ENCODE measurements at regions of chr7 and their contacts with region 1.

Region 1: DNA sequence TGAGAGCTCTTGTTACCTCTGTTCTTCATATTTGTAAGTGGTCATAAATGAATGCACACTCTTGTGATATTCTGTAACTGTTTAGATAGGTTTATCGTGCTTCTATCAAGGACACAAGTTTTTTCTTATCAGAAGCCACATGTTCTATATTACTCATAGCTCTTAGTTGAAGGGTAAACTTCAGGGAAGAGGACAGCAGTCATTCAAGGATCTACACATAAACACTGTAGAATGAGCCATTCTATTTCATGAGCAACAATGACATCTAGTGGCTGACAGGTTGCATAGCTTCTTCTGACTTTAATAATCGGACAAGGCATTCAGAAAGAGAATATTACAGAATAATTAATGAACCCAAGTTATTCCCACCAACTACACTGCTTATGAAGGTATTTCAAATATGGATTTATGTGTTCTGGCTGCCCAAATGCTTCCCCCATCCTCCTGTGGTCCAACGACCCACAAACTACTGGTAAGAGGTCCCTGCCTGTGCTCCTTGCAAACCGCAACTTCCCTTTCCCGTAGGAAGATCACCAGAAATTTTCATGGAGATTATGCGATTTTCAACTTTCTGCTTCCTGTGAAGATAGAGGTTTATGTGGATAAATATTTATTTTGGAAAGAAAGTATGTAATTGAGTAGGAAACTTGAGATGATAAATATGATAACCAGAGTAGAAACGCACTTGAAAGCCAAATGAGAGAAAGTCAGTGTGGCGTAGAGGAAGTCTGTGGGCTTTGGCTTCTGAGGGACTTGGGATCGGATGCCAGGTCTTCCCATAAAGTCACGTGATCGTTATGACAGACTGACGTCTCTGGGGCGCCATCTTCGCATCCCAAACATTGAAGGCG is 16.8 kb upstream of the ABCB5 start:
- DNase-seq: peak in 1 of 3 donors; percentile 21
- ATAC-seq: peak; percentile 72 to 74
- H3K4me3 ChIP-seq: no peak overlapping the region
- H3K27ac ChIP-seq: no peak overlapping the region
- H3K4me1 ChIP-seq: no peaks in the 10 kb centered on the region
- H3K27me3 ChIP-seq: no peaks in the 10 kb centered on the region

Region 2: DNA sequence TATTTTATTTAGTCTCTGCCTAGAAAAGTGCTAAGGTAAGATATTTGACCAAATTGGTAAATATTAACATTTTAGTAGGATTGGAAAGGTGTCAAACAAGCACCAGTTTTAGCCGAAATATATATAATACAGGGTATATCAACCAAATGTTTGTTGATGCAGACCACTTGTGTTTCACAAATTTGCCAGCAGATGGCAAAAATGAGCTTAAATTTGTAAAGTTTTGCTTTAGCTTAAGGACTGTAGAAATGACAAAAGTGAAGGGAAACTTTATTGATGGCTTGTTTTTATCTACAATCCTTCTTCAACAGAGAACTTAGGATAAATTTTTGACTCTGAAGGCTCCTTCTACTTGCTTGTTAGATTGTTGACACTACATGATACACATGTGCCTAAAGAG is 885.0 kb before region 1 on chr7:
- intact Hi-C with region 1: loop called in 3 of 4 experiments (anchors 5 to 10 kb)
- DNase-seq: no peak
- ATAC-seq: no peak
- H3K4me3 ChIP-seq: no peak overlapping the region
- H3K27ac ChIP-seq: no peak overlapping the region
- H3K4me1 ChIP-seq: no peaks in the 10 kb centered on the region
- H3K27me3 ChIP-seq: no peaks in the 10 kb centered on the region

Region 3: DNA sequence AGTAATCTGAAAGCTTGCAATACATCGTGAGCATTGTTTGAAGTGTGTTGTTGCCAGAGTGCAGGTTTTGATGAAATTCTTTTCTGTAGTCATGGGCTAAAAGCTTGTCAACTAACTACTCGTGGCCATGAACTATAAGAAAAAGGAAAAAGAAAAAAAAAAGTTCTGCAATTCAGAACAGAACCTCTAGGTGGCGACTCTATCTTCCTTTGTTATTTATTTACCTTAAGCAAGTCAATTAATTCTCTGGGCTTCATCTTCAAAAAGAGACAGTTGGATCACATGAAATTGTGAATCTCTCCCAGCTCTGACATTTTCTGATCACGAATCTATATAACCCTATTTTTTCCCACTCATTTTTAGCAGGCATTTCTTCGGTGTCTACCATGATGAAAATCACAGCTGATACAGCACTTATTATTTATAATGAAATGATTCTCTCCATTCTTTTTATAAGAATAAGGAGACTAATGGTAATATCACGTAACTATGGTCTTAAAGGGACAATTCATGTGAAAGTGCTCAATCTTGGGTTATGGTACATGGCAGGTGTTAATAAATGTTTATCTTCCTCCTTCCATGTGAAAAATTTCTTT is 844.1 kb before region 1 on chr7:
- intact Hi-C with region 1: loop called in 3 of 4 experiments (anchors 10 kb)
- DNase-seq: no peak
- ATAC-seq: no peak
- H3K4me3 ChIP-seq: no peak overlapping the region
- H3K27ac ChIP-seq: no peak overlapping the region
- H3K4me1 ChIP-seq: no peaks in the 10 kb centered on the region
- H3K27me3 ChIP-seq: no peaks in the 10 kb centered on the region

Region 4: DNA sequence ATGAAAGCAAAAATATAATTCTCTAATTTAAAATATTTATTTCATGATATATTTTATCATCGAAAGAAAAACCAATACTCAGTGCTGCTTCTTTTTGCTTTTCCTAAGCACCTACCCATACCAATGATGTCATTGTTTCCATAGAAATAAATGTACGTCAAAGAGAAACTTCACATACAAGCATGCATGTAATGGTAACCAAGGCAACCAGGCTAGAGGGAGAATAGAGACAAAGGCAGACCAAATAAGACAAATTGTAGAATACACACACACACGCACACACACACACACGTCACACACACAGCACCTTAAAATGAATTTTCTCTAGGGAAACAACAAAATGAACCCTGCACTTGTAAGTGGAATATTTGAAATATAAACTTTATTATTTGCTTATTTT is 457.0 kb before region 1 on chr7:
- intact Hi-C with region 1: loop called in 1 of 4 experiments (anchors 10 kb)
- DNase-seq: no peak
- ATAC-seq: no peak
- H3K4me3 ChIP-seq: no peak overlapping the region
- H3K27ac ChIP-seq: no peak overlapping the region
- H3K4me1 ChIP-seq: no peaks in the 10 kb centered on the region
- H3K27me3 ChIP-seq: no peaks in the 10 kb centered on the region

Region 5: DNA sequence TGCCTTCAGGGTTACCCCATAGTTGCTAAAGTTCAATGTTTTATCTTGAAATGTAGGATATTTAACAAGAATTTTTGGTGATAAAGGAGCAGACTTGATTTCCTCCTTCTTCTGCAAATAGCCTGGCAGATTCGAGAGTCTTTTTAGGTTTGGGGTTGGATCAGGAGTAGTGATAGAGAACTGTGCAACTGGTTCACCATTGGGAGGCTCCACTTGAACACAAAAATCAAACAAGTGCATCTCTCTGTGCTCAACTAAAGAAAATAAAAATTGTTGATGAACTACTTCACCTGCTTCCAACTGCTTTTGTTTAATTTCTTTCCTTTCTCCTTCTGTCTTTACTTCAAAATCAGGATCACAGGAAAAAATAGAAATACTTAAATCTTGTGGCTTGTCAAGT is 440.0 kb before region 1 on chr7:
- intact Hi-C with region 1: loop called in 3 of 4 experiments (anchors 5 to 10 kb)
- DNase-seq: no peak
- ATAC-seq: peak; percentile 63 to 72
- H3K4me3 ChIP-seq: no peak overlapping the region
- H3K27ac ChIP-seq: no peak overlapping the region
- H3K4me1 ChIP-seq: no peaks in the 10 kb centered on the region
- H3K27me3 ChIP-seq: no peaks in the 10 kb centered on the region

Region 6: GRCh38 chr7:20329389-20330239 is 269.1 kb before region 1 on chr7:
- intact Hi-C with region 1: loop called in 1 of 4 experiments (anchors 10 kb)
- DNase-seq: peak; percentile 45 to 80 (median 74)
- ATAC-seq: peak; percentile 75 to 78
- H3K4me3 ChIP-seq: peak overlapping the region; percentile 49
- H3K27ac ChIP-seq: peak overlapping the region; percentile 63
- H3K4me1 ChIP-seq: no peaks in the 10 kb centered on the region
- H3K27me3 ChIP-seq: no peaks in the 10 kb centered on the region

Measured in right cardiac atrium (tissue), 5 donors.